Vagina (tissue), 2 donors: ENCODE measurements at regions of chr11 and their contacts with region 1.

Region 1: GRCh38 chr11:75280227-75280701 is 39.7 kb downstream of the TPBGL start:
- DNase-seq: no peak
- H3K4me3 ChIP-seq: no peak overlapping the region
- H3K27ac ChIP-seq: peak overlapping the region; percentile 20
- H3K4me1 ChIP-seq: no peaks in the 10 kb centered on the region
- H3K27me3 ChIP-seq: no peaks in the 10 kb centered on the region
- CTCF ChIP-seq: peak; percentile 96 to 99 (median 97)
- POLR2A ChIP-seq: no peak

Region 2: DNA sequence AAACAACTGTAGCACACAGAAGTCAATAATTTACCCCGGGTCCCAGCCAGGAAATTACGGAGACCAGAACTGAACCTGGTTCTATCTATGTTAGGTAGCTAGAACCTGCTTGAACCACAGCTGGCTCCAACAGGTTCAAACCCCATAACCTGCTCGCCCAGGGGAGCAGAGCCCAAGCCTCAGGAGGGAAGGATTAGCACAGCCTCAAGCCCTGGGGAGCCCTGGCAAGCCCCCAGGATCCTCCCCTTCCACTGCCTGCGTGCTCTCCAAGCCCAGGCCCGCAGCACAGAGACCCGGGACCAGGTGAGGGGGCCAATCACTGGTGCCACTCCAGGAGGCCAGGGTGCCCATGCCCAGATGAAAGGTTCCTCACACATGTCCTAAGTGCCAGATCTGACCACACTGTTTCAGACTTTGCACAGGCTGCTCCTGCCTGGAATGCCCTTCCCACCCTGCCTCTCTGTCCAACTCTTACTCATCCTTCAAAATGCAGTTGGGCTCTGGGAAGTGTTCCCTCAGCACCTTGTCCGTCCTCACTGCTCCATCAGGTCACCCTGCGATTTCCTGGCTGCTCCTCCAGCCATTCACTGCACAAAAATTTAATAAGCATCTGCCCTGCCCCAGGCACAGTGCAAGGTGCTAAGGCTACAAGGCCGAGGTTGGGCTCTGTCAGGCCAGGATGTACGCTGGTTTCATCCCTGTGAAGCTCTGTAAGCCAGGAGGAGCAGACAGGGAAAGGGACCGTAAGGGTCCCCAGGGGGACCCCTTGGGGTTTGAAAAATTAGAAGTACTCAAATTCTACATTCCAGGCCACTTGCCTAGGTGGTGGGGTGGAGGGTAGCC is 39.0 kb after region 1 on chr11:
- intact Hi-C with region 1: loop called (anchors 5 kb)
- DNase-seq: no peak
- H3K4me3 ChIP-seq: no peak overlapping the region
- H3K27ac ChIP-seq: no peak overlapping the region
- H3K4me1 ChIP-seq: peaks cover 28% of the 10 kb centered on the region
- H3K27me3 ChIP-seq: no peaks in the 10 kb centered on the region
- CTCF ChIP-seq: no peak
- POLR2A ChIP-seq: no peak

Region 3: DNA sequence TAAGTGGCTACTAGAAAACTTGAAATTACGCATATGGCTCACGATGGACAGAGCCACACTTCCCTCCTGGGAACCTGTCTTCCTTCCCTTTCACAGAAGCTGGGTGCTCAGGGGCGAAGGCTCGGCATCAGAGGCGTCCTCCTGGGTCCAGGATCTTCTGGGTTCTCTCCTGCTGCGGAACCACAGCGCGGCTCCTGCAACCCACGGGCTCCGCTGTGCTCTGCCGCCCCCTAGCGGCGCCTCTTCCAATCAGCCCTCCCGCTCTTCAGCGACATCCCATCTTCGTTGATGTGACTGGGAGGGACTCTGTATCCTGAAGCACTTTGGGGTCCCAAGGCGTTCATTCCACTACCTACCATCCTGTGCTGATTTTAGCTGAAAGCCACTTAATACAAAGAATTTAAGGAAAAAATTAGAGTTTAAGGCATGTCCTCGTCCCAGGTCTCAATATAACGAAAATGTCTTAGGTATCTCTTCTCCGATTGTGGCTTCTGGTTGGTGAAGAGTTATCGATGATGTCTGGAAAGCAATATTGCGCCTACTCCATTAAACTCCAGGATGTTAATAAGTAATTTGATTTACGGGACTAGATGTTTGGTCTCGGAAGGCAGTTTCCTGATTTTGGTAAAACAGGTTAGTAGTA is 104.3 kb after region 1 on chr11:
- intact Hi-C with region 1: loop called (anchors 2 kb)
- DNase-seq: no peak
- H3K4me3 ChIP-seq: no peak overlapping the region
- H3K27ac ChIP-seq: no peak overlapping the region
- H3K4me1 ChIP-seq: peaks cover 6% of the 10 kb centered on the region
- H3K27me3 ChIP-seq: no peaks in the 10 kb centered on the region
- CTCF ChIP-seq: peak; percentile 96 to 97 (median 96)
- POLR2A ChIP-seq: no peak

Region 4: GRCh38 chr11:75468534-75469340 is 188.5 kb after region 1 on chr11:
- intact Hi-C with region 1: no loop called
- DNase-seq: no peak
- H3K4me3 ChIP-seq: no peak overlapping the region
- H3K27ac ChIP-seq: no peak overlapping the region
- H3K4me1 ChIP-seq: peaks cover 23% of the 10 kb centered on the region
- H3K27me3 ChIP-seq: no peaks in the 10 kb centered on the region
- CTCF ChIP-seq: no peak
- POLR2A ChIP-seq: no peak

Region 5: DNA sequence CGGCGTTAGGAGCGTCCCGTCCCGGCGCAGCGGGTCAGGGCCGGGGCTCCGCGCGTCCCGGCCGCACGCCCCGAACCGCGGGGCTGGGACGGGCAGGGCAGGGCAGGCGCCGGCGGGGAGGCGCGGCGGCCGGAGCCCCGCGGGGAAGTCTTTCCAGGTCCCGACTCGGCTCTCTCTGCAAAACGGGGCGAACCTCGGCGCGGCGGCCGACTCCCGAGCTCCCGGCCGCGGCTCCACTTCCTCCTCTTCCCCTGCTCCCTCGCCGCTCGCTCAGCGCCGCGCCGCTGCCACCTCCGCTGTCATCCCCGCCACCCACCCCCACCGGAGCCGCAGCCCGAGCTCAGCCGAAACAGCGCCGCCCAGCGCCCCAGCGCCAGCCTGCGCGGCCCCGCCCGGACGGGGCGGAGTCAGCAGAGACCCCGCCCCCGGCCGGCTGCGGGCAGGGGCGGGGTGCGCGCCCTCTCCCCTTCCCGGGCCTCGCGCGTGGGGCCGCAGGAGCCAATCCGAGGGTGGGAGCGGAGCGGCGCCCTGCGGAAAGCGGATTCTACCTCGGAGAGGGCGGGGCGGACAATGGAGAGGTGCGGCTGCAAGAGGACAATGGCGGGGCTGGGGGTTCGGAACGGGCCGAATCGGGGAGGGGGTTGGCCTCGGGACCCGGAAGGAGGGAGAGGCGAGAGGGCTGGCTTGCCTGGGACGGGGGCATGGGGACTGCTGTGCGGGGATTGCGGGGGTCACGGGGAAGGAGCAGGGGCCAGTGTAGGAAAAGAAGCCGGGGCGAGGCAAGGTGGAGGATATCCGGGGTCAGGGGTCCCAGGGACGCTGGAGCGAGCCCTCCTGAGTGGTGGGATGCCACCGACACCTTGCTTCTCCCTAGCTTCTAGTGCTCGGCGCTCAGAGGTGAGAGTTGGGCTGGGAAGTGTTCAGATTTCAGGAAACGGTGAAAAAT is 245.6 kb after region 1 on chr11 and contains the start of gene GDPD5:
- intact Hi-C with region 1: loop called (anchors 10 kb)
- DNase-seq: no peak
- H3K4me3 ChIP-seq: peak within 1 kb of the TSS; percentile 61 to 81
- H3K27ac ChIP-seq: peak within 1 kb of the TSS; percentile 74
- H3K4me1 ChIP-seq: peaks cover 31% of the 10 kb centered on the region
- H3K27me3 ChIP-seq: no peaks in the 10 kb centered on the region
- CTCF ChIP-seq: peak in 1 of 3 experiments; percentile 51
- POLR2A ChIP-seq: no peak
- total RNA-seq, gene GDPD5: 36.6 TPM